ENCODE measurements at regions of chr3 and their contacts with region 1.

Region 1: DNA sequence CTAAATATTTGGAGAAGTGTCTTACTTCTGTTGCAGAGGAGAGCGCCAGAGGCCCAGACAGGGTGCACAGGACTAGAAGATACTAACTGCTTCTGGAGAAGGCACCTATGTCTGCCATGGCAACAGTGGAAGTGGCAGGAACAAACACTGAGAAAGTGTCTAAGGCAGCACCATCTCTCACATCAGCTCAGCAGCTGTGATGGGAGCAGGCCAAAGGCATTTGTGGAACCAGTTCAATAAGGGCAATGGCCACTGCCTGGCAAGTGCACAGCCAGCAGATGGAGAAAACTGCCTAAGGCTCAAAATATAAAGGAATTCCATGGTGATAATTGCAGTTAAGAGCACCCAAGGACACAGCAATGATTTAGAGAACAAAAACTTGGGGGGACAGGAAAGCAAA is 563.0 kb upstream of the CCDC54 start:
- DNase-seq: peak in 3 of 5 donors; percentile 27 to 51 (median 37)
- ATAC-seq: peak; percentile 51 to 69 (median 62)
- H3K4me3 ChIP-seq: no peak overlapping the region
- H3K27ac ChIP-seq: peak overlapping the region in 4 of 12 donors; percentile 30 to 52 (median 40)
- H3K4me1 ChIP-seq: peaks cover 0 to 42% (median 12%) of the 10 kb centered on the region in 12 donors
- H3K27me3 ChIP-seq: no peaks in the 10 kb centered on the region
- CTCF ChIP-seq: no peak
- POLR2A ChIP-seq: no peak

Region 2: DNA sequence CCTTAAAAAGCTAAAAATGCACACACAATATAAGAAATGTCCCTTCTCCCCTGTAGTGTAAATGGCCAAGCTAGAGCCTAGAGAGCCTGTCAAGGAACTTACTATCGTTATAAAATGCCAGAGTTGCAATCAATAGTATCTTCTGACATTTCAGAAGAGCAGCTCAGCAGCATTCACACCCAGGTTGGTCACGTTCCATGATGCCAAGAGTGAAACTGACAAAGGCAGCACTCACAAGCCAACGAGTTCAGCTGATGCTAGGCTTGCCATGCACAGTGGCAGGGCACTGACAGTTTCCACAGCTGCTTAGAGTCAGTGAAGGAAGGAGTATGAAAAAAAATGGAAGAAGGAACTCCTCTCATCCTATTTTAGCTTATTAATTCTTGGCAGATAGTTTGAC is 231.6 kb after region 1 on chr3:
- intact Hi-C with region 1: loop called in 1 of 10 experiments (anchors 5 kb)
- DNase-seq: no peak
- ATAC-seq: peak in 3 of 4 donors; percentile 41 to 56 (median 45)
- H3K4me3 ChIP-seq: no peak overlapping the region
- H3K27ac ChIP-seq: no peak overlapping the region
- H3K4me1 ChIP-seq: no peaks in the 10 kb centered on the region
- H3K27me3 ChIP-seq: no peaks in the 10 kb centered on the region
- CTCF ChIP-seq: no peak
- POLR2A ChIP-seq: no peak

Region 3: DNA sequence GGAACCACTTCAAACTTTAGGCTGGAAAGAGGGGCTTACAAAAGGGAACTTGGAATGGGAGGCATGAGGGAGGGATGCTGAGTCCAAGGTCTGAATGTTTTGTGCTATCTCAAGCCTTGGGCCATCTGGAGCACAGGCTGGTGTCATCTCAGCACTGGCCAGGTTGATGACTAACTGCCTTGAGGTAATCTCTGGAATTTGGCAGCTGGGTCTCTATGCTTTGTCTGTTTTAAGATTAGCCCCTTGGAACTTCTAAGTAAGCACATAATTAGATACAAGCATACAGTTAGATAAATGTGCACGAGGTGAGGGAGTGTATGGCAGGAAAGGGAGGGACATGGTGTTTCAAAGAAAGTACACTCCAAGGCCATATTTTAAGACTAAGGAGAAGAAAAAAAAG is 310.7 kb after region 1 on chr3:
- intact Hi-C with region 1: loop called in 1 of 10 experiments (anchors 5 kb)
- DNase-seq: peak in 4 of 5 donors; percentile 23 to 64 (median 38)
- ATAC-seq: peak; percentile 84 to 96 (median 87)
- H3K4me3 ChIP-seq: no peak overlapping the region
- H3K27ac ChIP-seq: peak overlapping the region in 5 of 12 donors; percentile 8 to 46 (median 35)
- H3K4me1 ChIP-seq: peaks cover 0 to 18% (median 4%) of the 10 kb centered on the region in 12 donors
- H3K27me3 ChIP-seq: no peaks in the 10 kb centered on the region
- CTCF ChIP-seq: no peak
- POLR2A ChIP-seq: no peak

Measured in heart left ventricle (tissue), 16 donors.